H1 (cell line): ENCODE measurements at regions of chr20 and their contacts with region 1.

Region 1: GRCh38 chr20:1325173-1326030 is 3.5 kb downstream of the SDCBP2 start:
- DNase-seq: peak; percentile 79 to 97
- H3K4me3 ChIP-seq: peak overlapping the region; percentile 88 to 94 (median 93)
- H3K27ac ChIP-seq: peak overlapping the region; percentile 95
- H3K4me1 ChIP-seq: peaks cover 2 to 13% (median 5%) of the 10 kb centered on the region in 4 experiments; a peak in 6 of 7 replicates
- H3K27me3 ChIP-seq: no peaks in the 10 kb centered on the region
- CTCF ChIP-seq: no peak
- EP300 ChIP-seq: peak in 1 of 2 experiments; percentile 24; a peak in 1 of 3 replicates
- POLR2A ChIP-seq: peak; percentile 95 to 98
- RAD21 ChIP-seq: no peak

Region 2: GRCh38 chr20:924639-925038 is 400.8 kb before region 1 on chr20:
- CTCF ChIA-PET with region 1: no interaction called
- POLR2A ChIA-PET with region 1: no interaction called
- DNase-seq: no peak
- H3K4me3 ChIP-seq: no peak overlapping the region
- H3K27ac ChIP-seq: no peak overlapping the region
- H3K4me1 ChIP-seq: no peaks in the 10 kb centered on the region
- H3K27me3 ChIP-seq: no peaks in the 10 kb centered on the region
- CTCF ChIP-seq: no peak
- EP300 ChIP-seq: no peak
- POLR2A ChIP-seq: no peak
- RAD21 ChIP-seq: no peak

Region 3: GRCh38 chr20:1212607-1213396 is 112.6 kb before region 1 on chr20:
- CTCF ChIA-PET with region 1: no interaction called
- POLR2A ChIA-PET with region 1: no interaction called
- DNase-seq: peak; percentile 53 to 77
- H3K4me3 ChIP-seq: no peak overlapping the region
- H3K27ac ChIP-seq: no peak overlapping the region
- H3K4me1 ChIP-seq: peaks cover 0 to 10% (median 0%) of the 10 kb centered on the region in 4 experiments; a peak in 3 of 7 replicates
- H3K27me3 ChIP-seq: 0 out of 7 replicates have a peak, but pooled peaks cover 0 to 3% (median 0%) of the 10 kb centered on the region in 4 experiments
- CTCF ChIP-seq: peak; percentile 80 to 93 (median 85)
- EP300 ChIP-seq: no peak
- POLR2A ChIP-seq: no peak
- RAD21 ChIP-seq: peak; percentile 92

Region 4: DNA sequence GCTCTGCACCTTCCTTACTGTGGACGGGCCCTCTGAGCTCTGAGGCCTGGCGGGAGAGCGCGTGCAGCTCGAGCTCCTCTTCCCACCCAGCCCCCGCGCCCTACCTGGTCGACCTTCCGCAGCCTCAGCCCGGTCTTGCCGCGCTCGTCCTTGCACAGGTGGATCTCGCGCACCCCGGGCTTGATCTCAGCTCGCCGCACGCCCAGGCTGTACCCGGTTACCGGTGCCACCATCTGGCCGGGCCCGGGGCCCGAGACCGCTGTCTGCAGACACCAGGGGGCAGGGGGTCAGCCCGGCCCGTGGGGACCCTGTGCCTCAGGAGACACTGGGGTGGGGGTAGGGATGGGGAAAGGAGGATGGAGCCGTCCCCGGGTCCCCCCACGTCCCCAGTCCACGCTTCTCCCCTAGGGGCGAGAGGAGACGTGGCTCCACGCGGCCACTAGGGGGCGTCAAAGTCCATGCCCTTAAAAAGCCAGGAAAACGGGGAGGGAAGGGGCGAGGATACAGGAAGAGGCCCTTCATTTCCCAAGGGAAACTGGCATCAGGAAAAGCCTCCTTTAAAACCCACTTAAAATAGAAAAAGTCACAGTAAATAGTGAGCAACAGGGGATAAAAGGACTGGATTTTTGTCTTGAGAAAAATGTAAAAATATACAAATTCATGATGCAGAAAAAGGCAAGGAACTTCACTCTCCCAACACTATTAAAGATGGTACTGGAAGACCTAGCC is 12.0 kb before region 1 on chr20:
- CTCF ChIA-PET with region 1: interaction called, 28 read pairs
- POLR2A ChIA-PET with region 1: interaction called, 6 read pairs
- DNase-seq: peak in 1 of 2 experiments; percentile 91
- H3K4me3 ChIP-seq: peak overlapping the region; percentile 34 to 73 (median 58)
- H3K27ac ChIP-seq: no peak overlapping the region
- H3K4me1 ChIP-seq: peaks cover 0 to 2% (median 0%) of the 10 kb centered on the region in 4 experiments; a peak in 4 of 7 replicates
- H3K27me3 ChIP-seq: peaks cover 0 to 12% (median 10%) of the 10 kb centered on the region in 4 experiments; a peak in 5 of 7 replicates
- CTCF ChIP-seq: peak; percentile 88 to 93 (median 92)
- EP300 ChIP-seq: no peak
- POLR2A ChIP-seq: no peak
- RAD21 ChIP-seq: peak; percentile 80 to 88

Region 5: GRCh38 chr20:1336699-1337367 is 11.4 kb after region 1 on chr20:
- CTCF ChIA-PET with region 1: interaction called, 7 read pairs
- POLR2A ChIA-PET with region 1: interaction called, 34 read pairs
- DNase-seq: peak in 1 of 2 experiments; percentile 48
- H3K4me3 ChIP-seq: no peak overlapping the region
- H3K27ac ChIP-seq: no peak overlapping the region
- H3K4me1 ChIP-seq: peaks cover 0 to 2% (median 0%) of the 10 kb centered on the region in 4 experiments; a peak in 3 of 7 replicates
- H3K27me3 ChIP-seq: no peaks in the 10 kb centered on the region
- CTCF ChIP-seq: no peak
- EP300 ChIP-seq: no peak
- POLR2A ChIP-seq: no peak
- RAD21 ChIP-seq: no peak

Region 6: DNA sequence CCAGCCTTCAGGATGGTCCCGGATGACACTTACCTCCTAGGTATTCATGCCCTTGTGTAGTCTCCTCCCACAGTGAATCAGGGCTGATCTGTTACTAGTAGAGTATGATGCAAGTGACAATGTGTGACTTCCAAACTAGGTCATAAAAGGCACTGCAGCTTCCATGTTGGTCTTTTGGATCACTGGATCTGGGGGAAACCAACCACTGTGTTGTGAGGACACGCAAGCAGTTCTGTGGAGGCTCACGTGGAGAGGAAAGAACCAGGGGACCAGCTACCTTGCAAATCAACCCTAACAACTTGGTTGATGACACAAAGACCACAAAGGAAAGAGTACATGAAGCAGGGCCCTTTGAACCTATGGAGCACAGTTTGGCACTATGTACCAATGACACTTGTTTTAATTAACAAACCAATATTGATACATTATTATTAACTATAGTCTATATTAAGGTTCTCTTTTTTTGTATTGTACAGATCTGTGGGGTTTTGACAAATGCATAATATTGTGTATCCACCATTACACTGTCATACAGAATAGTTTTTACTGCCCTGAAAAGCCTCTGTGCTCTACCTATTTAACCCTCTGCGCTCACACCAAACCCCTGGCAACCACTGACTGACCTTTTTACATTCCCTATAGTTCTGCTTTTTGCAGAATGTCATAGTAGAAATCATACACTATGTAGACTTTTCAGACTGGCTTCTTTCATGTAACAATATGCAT is 19.8 kb after region 1 on chr20:
- CTCF ChIA-PET with region 1: interaction called, 13 read pairs
- POLR2A ChIA-PET with region 1: interaction called, 34 read pairs
- DNase-seq: peak in 1 of 2 experiments; percentile 19
- H3K4me3 ChIP-seq: no peak overlapping the region
- H3K27ac ChIP-seq: no peak overlapping the region
- H3K4me1 ChIP-seq: no peaks in the 10 kb centered on the region
- H3K27me3 ChIP-seq: no peaks in the 10 kb centered on the region
- CTCF ChIP-seq: no peak
- EP300 ChIP-seq: no peak
- POLR2A ChIP-seq: no peak
- RAD21 ChIP-seq: no peak

Region 7: GRCh38 chr20:1391640-1392498 is 66.5 kb after region 1 on chr20:
- CTCF ChIA-PET with region 1: interaction called, 7 read pairs
- POLR2A ChIA-PET with region 1: interaction called, 10 read pairs
- DNase-seq: no peak
- H3K4me3 ChIP-seq: peak overlapping the region; percentile 53 to 86 (median 79)
- H3K27ac ChIP-seq: no peak overlapping the region
- H3K4me1 ChIP-seq: peaks cover 10 to 31% (median 11%) of the 10 kb centered on the region in 4 experiments; a peak in 6 of 7 replicates
- H3K27me3 ChIP-seq: peaks cover 0 to 19% (median 8%) of the 10 kb centered on the region in 4 experiments; a peak in 5 of 7 replicates
- CTCF ChIP-seq: no peak
- EP300 ChIP-seq: no peak
- POLR2A ChIP-seq: no peak
- RAD21 ChIP-seq: no peak